Right ventricle myocardium inferior (tissue), 1 donor: ENCODE measurements at regions of chr1 and their contacts with region 1.

Region 1: GRCh38 chr1:228734881-228735801 is at the start of gene RHOU:
- DNase-seq: peak; percentile 92
- ATAC-seq: peak; percentile 95
- total RNA-seq, gene RHOU: 5.4 TPM

Region 2: DNA sequence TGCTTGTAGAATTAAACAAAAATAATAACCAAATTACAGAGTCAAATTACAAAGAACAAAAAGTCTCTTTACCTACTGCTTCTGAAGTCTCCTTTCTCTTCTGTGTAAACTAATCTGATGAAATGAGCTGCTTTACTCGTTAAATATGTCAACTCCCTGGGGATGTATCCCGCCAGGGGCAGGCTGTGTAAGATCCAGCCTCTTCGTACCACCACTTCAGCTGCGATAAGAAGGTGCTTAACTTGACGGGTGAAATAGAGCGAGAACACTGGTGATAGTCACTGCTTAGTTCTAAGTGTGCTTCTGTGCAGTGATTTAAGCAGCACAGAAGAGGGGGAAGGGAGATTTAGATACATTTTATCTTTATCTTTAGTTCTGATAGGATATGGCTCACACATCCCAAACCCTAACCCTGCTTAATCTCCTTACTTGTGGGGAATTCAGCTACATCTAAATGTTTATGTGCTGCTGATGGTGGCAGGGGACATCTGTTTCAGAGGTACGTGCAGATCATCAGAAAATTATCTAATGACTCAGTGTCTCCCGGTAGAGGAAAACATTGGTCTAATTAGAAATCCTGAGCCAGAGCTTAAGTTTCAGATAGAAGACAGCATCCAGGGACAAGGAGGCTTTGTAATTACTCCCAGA is 46.1 kb after region 1 on chr1:
- intact Hi-C with region 1: loop called (anchors 5 kb)
- DNase-seq: no peak
- ATAC-seq: peak; percentile 81

Region 3: DNA sequence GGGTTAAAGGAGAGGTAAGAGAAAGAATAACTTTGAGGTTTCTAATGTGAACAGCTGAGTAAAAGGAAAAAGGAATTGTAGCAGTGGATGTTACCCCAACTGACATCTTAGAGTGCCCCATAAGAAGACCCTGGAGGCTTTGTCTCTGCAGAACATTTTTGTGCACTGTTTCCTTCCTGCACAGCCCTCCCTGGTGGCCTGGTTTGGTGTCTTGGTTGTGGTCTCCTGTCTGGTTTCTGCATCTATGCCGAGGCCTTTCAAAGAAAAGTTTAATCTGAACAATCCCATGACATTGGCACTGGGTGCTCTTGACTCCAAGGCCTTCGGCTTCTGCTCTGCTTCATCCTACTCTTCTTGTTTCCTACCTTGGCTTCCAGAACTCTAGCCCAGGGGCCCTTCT is 57.9 kb after region 1 on chr1:
- intact Hi-C with region 1: no loop called
- DNase-seq: no peak
- ATAC-seq: no peak

Region 4: GRCh38 chr1:228938537-228938901 is 203.4 kb after region 1 on chr1:
- intact Hi-C with region 1: loop called (anchors 5 kb)
- DNase-seq: peak; percentile 58
- ATAC-seq: peak; percentile 75

Region 5: DNA sequence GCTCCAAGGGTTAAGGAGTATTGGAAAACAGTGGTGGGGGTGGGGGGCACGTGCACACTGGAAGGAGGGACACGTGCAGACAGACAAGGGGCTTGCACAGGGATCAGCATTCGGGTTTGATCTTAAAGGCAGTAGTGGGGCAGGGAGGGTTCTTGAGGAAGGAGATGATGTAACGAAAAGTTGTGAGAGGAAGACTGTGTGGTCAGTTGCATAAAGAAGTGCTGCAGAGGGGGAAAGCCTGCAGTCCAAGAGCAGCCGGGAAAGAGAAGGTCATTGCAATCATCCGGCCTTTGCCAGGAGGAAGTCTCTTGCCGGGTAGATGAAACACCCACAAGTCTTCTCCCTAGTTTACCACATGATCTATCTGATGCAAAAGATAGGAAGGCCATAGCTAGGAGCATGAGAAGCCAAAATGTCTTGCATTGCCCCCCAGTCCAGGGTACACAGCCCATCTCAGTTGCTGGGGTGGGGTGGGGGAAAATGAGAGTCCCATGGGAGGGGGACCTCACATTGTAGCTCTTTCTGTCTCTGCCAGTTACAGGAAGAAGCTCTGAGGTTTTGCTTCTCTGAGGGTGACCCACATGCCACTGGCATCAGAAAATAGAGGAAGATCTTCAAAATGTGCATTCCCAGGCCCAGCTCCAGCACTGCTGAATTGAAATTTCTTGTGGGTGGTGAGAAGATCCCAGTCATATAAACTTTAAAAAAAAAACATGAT is 333.3 kb after region 1 on chr1:
- intact Hi-C with region 1: loop called (anchors 2 kb)
- DNase-seq: no peak
- ATAC-seq: peak; percentile 61

Region 6: DNA sequence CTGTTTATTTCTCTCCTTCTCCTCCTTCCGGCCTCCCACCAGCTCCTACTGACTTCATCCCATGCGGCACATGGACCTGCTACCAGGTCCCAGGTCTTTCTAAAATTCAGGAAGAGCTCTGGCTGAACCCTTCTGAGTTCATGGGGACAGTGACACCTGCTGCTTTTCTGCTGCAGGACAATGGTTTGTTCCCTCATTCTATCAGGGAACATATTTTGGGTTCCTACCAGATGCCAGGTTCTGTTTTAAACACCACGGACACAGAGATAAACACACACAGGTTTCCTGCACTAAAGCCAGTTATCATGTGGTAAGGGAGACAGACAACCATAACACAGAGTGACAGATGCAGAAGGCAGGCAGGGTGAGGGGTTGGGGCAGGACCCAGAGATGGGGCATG is 421.7 kb after region 1 on chr1:
- intact Hi-C with region 1: loop called (anchors 2 kb)
- DNase-seq: no peak
- ATAC-seq: peak; percentile 83

Region 7: DNA sequence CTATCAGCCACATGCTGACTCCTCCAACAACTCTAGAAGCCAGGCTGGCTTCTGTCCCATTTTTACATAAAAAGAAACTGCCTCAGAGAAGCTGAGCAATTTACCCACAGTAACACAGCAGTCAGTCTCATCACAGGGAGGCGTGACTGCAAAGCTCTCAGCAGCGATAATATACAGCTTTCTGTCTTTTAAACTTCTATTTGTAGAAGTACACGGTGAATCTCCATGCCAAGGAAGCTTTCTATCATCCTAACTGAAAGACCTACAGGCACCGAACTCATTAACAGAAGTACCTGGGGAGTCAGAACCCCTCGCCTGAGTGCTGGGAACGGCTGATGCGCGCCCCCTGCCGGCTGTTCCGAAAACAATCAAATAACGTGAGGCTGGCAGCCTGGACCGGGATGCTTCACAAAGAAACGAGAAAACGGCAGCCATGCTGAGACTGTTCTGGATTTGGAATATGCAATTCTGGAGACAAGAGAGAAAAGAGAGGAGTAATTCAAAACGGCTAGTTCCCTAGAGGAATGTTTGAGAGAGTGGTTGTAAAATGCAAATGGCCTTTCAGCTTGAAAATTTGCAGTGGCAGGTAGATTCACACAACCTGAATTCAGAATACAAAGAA is 492.3 kb after region 1 on chr1:
- intact Hi-C with region 1: loop called (anchors 1 kb)
- DNase-seq: peak; percentile 92
- ATAC-seq: no peak